Endothelial cell of umbilical vein (primary cell): ENCODE measurements at regions of chr15 and their contacts with region 1.

Region 1: GRCh38 chr15:73560501-73561117 is 72.6 kb downstream of the NPTN start:
- DNase-seq: peak; percentile 80
- H3K4me3 ChIP-seq: no peak overlapping the region
- H3K27ac ChIP-seq: no peak overlapping the region
- H3K4me1 ChIP-seq: peaks cover 10% of the 10 kb centered on the region
- H3K27me3 ChIP-seq: no peaks in the 10 kb centered on the region
- CTCF ChIP-seq: peak; percentile 10 to 36
- POLR2A ChIP-seq: no peak

Region 2: GRCh38 chr15:71649894-71650293 is 1910.7 kb before region 1 on chr15:
- CTCF ChIA-PET with region 1: no interaction called
- POLR2A ChIA-PET with region 1: no interaction called
- dilution Hi-C with region 1: no loop called
- intact Hi-C with region 1: no loop called
- DNase-seq: no peak
- H3K4me3 ChIP-seq: no peak overlapping the region
- H3K27ac ChIP-seq: no peak overlapping the region
- H3K4me1 ChIP-seq: peaks cover 12% of the 10 kb centered on the region
- H3K27me3 ChIP-seq: peaks cover 0 to 2% of the 10 kb centered on the region in 2 experiments
- CTCF ChIP-seq: no peak
- POLR2A ChIP-seq: no peak

Region 3: DNA sequence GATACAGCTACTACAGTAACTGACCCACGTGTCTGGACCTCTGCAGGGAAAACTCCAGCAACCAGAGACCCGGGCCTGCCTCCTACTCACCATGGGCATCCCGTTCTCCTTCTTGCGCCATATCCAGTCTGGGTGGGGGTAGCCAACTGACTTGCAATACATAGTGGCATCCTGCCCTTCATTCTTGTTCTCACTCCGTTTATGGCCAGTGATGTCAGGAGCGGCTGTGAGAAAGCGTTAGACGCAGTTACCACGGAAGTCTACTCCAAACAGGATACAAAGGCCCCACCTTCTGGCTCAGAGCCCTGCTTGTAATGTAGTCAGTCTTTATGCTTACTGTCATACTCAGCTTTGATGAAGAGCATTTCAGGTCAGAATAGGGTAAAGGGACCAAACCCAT is 13.0 kb after region 1 on chr15:
- CTCF ChIA-PET with region 1: interaction called, 13 read pairs
- POLR2A ChIA-PET with region 1: no interaction called
- dilution Hi-C with region 1: no loop called
- intact Hi-C with region 1: no loop called
- DNase-seq: peak; percentile 80
- H3K4me3 ChIP-seq: no peak overlapping the region
- H3K27ac ChIP-seq: peak overlapping the region; percentile 49
- H3K4me1 ChIP-seq: peaks cover 13% of the 10 kb centered on the region
- H3K27me3 ChIP-seq: no peaks in the 10 kb centered on the region
- CTCF ChIP-seq: no peak
- POLR2A ChIP-seq: no peak

Region 4: DNA sequence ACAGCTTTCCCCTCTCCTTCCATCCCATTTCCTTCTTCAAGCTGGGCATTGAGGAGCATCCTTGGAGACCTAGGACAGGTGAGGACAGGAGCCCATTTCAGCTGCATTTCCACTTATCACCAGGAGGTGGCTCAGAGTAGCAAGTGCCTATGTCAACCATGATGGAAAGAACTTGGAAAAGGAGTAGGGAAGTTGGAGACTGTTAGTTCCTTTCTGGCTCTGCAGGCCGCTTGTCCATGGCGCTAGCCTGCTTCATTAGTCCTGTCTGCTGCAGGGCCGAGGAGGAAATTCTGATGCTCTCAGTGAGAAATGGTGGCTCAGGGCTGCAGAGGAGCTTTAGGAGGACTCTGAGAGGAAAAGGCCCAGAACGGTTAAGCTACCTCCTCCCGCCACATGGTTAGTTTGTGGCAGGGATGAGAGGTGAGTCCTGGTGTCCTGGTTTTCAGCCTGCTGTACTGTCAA is 116.6 kb after region 1 on chr15:
- CTCF ChIA-PET with region 1: interaction called, 33 read pairs
- POLR2A ChIA-PET with region 1: no interaction called
- dilution Hi-C with region 1: no loop called
- intact Hi-C with region 1: no loop called
- DNase-seq: peak; percentile 70
- H3K4me3 ChIP-seq: no peak overlapping the region
- H3K27ac ChIP-seq: no peak overlapping the region
- H3K4me1 ChIP-seq: no peaks in the 10 kb centered on the region
- H3K27me3 ChIP-seq: peaks cover 12 to 31% of the 10 kb centered on the region in 2 experiments
- CTCF ChIP-seq: peak; percentile 81
- POLR2A ChIP-seq: no peak

Region 5: DNA sequence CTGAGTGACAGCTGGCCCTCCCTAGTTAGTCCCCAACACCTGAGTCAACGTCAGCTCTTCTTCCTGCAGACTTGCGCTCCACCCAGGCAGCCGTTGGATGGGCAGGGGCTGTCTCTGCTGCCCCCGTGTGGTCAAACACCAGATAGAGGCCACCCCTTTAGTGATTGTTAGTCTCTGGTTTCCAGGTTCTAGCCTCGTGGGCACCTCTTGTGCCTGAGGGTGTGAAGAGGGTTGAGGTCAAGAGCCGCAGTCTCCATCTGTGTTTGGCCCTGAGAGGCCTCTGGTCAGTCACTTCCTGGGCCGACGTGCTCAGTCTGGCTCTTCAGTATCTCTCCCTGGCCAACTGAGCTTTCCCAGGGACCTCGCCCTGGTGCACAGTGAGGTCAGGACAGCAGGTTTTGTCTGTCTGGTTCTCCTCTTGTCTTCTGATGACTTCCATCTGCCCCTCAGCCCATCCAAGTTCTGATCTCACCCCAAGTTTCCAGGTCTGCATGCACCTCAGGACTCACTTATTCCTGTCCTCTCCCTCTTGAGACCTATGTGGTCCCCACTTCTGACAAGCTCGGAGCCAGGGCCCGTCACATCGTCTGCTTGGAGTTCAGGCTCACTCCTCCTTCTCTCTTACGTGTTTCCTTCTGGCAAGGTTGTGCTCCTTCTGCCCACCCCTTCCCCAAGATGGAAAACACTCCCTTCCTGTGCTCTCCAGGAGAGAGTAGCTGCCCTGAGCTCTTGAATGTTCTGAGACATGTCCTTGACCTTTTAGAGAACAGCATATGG is 144.4 kb after region 1 on chr15:
- CTCF ChIA-PET with region 1: interaction called, 81 read pairs
- POLR2A ChIA-PET with region 1: no interaction called
- dilution Hi-C with region 1: no loop called
- intact Hi-C with region 1: loop called (anchors 1 kb)
- DNase-seq: peak; percentile 52
- H3K4me3 ChIP-seq: no peak overlapping the region
- H3K27ac ChIP-seq: no peak overlapping the region
- H3K4me1 ChIP-seq: peaks cover 3% of the 10 kb centered on the region
- H3K27me3 ChIP-seq: no peaks in the 10 kb centered on the region
- CTCF ChIP-seq: peak; percentile 90 to 91
- POLR2A ChIP-seq: no peak